MCF 10A (cell line): ENCODE measurements at regions of chr9 and their contacts with region 1.

Region 1: GRCh38 chr9:132411091-132411508 is 1.1 kb downstream of the CFAP77 start:
- DNase-seq: peak; percentile 64
- H3K4me3 Mint-ChIP-seq: peak overlapping the region; percentile 46
- H3K27ac Mint-ChIP-seq: no peak overlapping the region
- H3K4me1 Mint-ChIP-seq: peaks cover 12% of the 10 kb centered on the region
- H3K27me3 Mint-ChIP-seq: peaks cover 37% of the 10 kb centered on the region
- CTCF ChIP-seq: peak; percentile 77

Region 2: DNA sequence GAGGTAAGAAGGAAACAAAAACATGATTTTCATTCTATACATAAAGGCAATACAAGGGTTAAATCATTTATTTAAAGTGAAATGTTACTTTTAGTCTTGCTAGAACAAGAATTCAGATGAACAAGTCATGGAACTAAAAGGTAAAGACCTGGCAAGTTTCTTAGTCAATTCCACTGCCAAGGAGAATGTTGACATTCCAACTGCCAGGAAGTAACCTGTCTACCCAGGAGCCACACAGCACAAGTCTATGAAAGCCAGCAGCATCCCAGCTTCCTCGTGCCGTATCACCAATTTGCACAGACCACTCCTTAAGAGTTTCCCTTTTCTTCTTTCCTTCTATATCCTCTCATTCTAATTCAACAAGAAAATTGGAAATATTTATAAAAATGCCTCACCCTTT is 136.2 kb before region 1 on chr9:
- CTCF ChIA-PET with region 1: no interaction called
- POLR2A ChIA-PET with region 1: no interaction called
- intact Hi-C with region 1: no loop called
- DNase-seq: no peak
- H3K4me3 Mint-ChIP-seq: no peak overlapping the region
- H3K27ac Mint-ChIP-seq: no peak overlapping the region
- H3K4me1 Mint-ChIP-seq: no peaks in the 10 kb centered on the region
- H3K27me3 Mint-ChIP-seq: no peaks in the 10 kb centered on the region
- CTCF ChIP-seq: no peak

Region 3: GRCh38 chr9:132575005-132575609 is 164.0 kb after region 1 on chr9:
- CTCF ChIA-PET with region 1: interaction called, 12 read pairs
- POLR2A ChIA-PET with region 1: no interaction called
- intact Hi-C with region 1: no loop called
- DNase-seq: peak; percentile 73
- H3K4me3 Mint-ChIP-seq: no peak overlapping the region
- H3K27ac Mint-ChIP-seq: no peak overlapping the region
- H3K4me1 Mint-ChIP-seq: peaks cover 5% of the 10 kb centered on the region
- H3K27me3 Mint-ChIP-seq: peaks cover 78% of the 10 kb centered on the region
- CTCF ChIP-seq: peak; percentile 81

Region 4: GRCh38 chr9:132973713-132974112 is 562.6 kb after region 1 on chr9:
- CTCF ChIA-PET with region 1: interaction called, 3 read pairs
- POLR2A ChIA-PET with region 1: no interaction called
- intact Hi-C with region 1: loop called (anchors 5 kb)
- DNase-seq: peak; percentile 11
- H3K4me3 Mint-ChIP-seq: no peak overlapping the region
- H3K27ac Mint-ChIP-seq: no peak overlapping the region
- H3K4me1 Mint-ChIP-seq: peaks cover 5% of the 10 kb centered on the region
- H3K27me3 Mint-ChIP-seq: peaks cover 66% of the 10 kb centered on the region
- CTCF ChIP-seq: no peak